Testis (tissue), 5 donors: ENCODE measurements at regions of chr7 and their contacts with region 1.

Region 1: GRCh38 chr7:151123822-151124464 is 37.7 kb downstream of the AGAP3 start:
- DNase-seq: peak; percentile 90
- H3K4me3 ChIP-seq: peak overlapping the region in 1 of 2 donors; percentile 13
- H3K27ac ChIP-seq: no peak overlapping the region
- H3K4me1 ChIP-seq: peaks cover 6% of the 10 kb centered on the region
- H3K27me3 ChIP-seq: no peaks in the 10 kb centered on the region
- CTCF ChIP-seq: peak; percentile 90 to 95 (median 91)
- POLR2A ChIP-seq: no peak

Region 2: DNA sequence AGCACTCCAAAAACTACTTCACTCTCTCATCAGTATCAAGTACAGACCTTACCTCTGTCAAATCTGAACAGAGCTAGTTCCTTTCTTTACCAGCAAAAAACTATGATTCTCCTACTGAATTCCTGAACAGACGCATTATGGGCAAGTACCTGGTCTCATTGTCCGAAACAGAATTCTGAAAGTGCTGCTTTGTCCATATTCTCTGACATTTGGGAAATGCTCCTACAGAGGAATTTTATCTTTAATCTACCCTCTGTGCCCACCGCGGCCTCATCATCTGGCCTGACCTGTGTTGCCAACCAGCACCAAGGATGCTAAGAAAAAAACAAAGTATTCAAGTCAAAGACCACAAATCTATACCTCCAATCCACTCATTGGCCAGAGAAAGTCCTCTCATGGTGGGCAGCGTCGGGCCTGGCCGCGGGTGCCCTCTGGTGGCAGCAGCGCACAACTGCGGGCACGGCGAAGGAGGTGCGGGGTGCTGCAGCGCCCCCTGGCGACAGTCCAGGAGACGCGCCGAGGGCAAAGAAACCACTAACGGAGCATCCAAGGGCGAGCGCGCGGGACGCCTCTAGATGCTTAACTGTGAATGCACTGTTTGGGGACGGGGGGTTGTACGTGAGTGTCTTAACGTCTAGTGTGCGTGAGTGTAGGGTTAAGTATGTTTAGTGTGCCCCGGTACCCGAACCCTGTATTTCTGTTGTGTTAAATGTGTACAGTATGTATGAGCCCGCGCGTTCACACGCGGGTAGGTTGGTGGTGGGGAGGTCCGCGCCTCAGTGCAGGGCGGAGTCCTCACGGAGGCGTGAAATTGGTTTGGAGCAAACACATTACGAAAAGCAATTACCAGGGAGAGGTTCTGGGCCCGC is 48.6 kb after region 1 on chr7:
- intact Hi-C with region 1: loop called (anchors 10 kb)
- DNase-seq: peak; percentile 87
- H3K4me3 ChIP-seq: no peak overlapping the region
- H3K27ac ChIP-seq: no peak overlapping the region
- H3K4me1 ChIP-seq: no peaks in the 10 kb centered on the region
- H3K27me3 ChIP-seq: no peaks in the 10 kb centered on the region
- CTCF ChIP-seq: peak; percentile 100
- POLR2A ChIP-seq: no peak